ENCODE measurements at regions of chr20 and their contacts with region 1.

Region 1: DNA sequence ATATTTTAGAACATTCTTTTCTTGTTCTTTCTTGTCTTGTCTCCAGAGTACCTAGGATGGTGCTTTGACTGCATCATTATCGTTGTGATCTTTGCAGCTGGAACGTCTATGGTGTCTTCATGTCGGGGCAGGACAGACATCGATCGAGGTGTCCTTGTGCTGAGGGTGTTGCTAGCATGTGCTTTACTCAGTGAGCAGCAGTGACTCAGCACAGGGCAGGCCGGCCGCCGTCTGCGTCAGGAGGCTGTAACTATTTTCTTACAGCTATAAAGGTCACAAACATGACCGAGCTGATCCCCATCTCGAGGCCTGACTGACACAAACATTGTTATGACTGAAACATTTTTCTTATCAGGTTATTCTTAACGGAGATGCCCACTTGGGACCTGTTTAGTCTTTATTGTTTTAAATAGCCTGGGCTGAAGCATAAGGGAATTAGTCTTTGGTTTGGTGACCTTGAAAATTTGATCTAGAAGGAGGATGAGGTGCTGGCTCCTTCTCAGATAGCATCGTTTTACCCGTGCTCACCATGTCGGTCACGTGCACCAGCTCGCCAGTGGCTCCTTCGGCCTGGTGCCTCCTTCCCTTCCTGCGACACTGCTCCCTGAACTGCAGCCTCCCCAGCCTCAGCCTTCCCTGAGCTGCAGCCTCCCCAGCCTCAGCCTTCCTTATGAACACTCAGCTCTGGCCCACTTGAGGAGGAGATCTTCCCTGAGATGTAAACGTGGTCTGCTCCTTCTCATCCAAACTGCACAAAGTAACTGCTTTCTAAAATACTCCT is 15.1 kb upstream of the CTCFL start:
- DNase-seq: no peak
- ATAC-seq: no peak

Region 2: DNA sequence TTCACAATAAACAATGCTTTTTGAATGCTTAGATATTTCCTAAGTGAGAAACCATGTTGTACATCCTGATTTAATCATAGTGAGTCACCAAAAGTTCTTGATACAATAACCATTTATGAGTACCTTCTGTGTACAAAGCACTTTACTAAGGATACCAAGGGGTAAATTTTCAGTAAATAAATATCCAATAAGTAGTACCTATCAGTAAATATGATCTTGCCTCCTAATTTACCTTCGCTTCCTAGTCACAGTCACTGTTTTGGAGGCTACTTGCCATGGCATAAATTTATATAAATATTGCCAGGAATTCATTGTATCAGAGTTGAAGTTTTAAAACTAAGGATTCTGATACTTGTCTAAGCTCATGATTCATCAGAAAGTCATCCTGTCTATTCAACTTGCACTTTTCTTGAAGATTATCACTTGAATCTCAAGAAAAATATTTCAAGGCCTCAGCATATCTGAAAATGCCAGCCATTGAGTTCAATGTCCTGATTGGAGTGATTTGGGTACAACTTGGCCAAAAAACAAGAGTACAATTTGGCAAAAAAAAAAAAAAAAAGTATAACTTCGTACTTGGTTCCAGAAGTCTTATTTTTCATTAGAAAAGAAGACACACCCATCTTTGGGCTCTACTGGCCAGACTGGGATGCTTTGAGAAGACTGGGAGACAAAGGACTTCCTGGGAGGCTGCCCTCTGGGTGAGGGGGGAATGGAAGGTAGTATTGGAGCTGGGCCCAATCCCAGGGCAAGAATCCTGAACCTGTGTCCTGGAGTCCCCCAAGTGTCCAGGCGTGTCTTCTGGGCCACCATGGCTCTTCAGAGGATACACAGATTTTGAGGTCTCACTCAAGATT is 802.3 kb after region 1 on chr20:
- intact Hi-C with region 1: loop called (anchors 5 kb)
- DNase-seq: no peak
- ATAC-seq: no peak

Measured in sciatic nerve (tissue), 2 donors.